Activated T-helper 1 cell treated with anti-CD3 and anti-CD28 coated beads, Interleukin-12 subunit alpha, Interleukin-12 subunit beta, Interleukin-2, Interleukin-4 antibody, amounts not matched to agents 30 ng/mL and 10 ng/mL and 1 ng/mL, durations not matched to agents 14 hours and 24 hours and 36 hours (primary cell): ENCODE measurements at regions of chr1 and their contacts with region 1.

Region 1: DNA sequence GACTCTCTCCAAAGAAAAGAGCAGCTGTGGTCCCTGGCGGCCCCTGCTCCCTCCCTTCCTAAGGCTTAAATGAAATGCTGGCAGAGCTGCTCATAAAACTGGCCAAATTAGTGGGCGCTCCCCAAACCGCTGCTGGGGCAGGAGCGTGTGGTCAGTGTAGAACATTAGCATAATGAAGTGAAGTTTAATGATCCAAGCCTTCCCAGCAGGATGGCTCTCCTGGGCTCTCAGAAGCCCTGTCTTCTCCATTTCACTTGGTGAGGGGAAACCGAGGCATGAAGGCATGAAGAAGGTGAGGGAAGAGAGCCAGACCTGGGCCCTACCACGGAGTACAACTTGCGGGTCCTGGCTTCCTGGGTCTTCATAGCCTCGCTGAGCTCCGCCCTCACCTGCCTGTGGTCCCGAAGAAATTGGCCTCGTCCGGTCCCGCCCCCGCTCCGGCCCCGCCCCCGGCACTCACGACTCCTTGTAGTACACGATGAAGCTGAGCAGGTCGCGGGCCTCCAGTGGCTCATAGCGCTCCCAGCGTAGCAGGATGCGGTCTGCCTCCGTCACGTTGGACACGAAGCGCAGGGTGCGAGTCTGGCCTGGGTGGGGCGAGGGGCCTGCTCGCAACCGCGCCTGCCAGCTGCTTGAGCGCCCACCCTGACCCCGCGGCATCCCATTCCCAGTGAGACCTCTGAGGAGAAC is 10.3 kb downstream of the INSRR start:
- DNase-seq: peak; percentile 67
- H3K4me3 Mint-ChIP-seq: peak overlapping the region; percentile 27
- H3K27ac Mint-ChIP-seq: peak overlapping the region; percentile 65
- H3K4me1 Mint-ChIP-seq: peaks cover 34% of the 10 kb centered on the region
- H3K27me3 Mint-ChIP-seq: peaks cover 40% of the 10 kb centered on the region

Region 2: GRCh38 chr1:156833603-156834002 is 15.0 kb before region 1 on chr1:
- intact Hi-C with region 1: loop called (anchors 1 kb)
- DNase-seq: no peak
- H3K4me3 Mint-ChIP-seq: peak overlapping the region; percentile 43
- H3K27ac Mint-ChIP-seq: peak overlapping the region; percentile 88
- H3K4me1 Mint-ChIP-seq: peaks cover 60% of the 10 kb centered on the region
- H3K27me3 Mint-ChIP-seq: no peaks in the 10 kb centered on the region

Region 3: GRCh38 chr1:156884560-156885184 is 36.1 kb after region 1 on chr1:
- intact Hi-C with region 1: no loop called
- DNase-seq: no peak
- H3K4me3 Mint-ChIP-seq: no peak overlapping the region
- H3K27ac Mint-ChIP-seq: no peak overlapping the region
- H3K4me1 Mint-ChIP-seq: peaks cover under 1% of the 10 kb centered on the region
- H3K27me3 Mint-ChIP-seq: peaks cover 26% of the 10 kb centered on the region

Region 4: GRCh38 chr1:156896490-156897033 is 48.0 kb after region 1 on chr1:
- intact Hi-C with region 1: no loop called
- DNase-seq: no peak
- H3K4me3 Mint-ChIP-seq: no peak overlapping the region
- H3K27ac Mint-ChIP-seq: no peak overlapping the region
- H3K4me1 Mint-ChIP-seq: peaks cover 6% of the 10 kb centered on the region
- H3K27me3 Mint-ChIP-seq: peaks cover 45% of the 10 kb centered on the region

Region 5: GRCh38 chr1:156980551-156980950 is 131.9 kb after region 1 on chr1:
- intact Hi-C with region 1: no loop called
- DNase-seq: no peak
- H3K4me3 Mint-ChIP-seq: no peak overlapping the region
- H3K27ac Mint-ChIP-seq: no peak overlapping the region
- H3K4me1 Mint-ChIP-seq: no peaks in the 10 kb centered on the region
- H3K27me3 Mint-ChIP-seq: peaks cover 29% of the 10 kb centered on the region